AG04450 (cell line): ENCODE measurements at regions of chr7 and their contacts with region 1.

Region 1: GRCh38 chr7:1065263-1066260 is 21.2 kb downstream of the GPR146 start:
- DNase-seq: no peak
- H3K4me3 ChIP-seq: no peak overlapping the region
- H3K27ac ChIP-seq: no peak overlapping the region
- H3K27me3 ChIP-seq: peaks cover 3% of the 10 kb centered on the region
- CTCF ChIP-seq: peak; percentile 87

Region 2: GRCh38 chr7:471866-472639 is 593.5 kb before region 1 on chr7:
- CTCF ChIA-PET with region 1: no interaction called
- POLR2A ChIA-PET with region 1: no interaction called
- DNase-seq: peak; percentile 95
- H3K4me3 ChIP-seq: no peak overlapping the region
- H3K27ac ChIP-seq: peak overlapping the region; percentile 95
- H3K27me3 ChIP-seq: no peaks in the 10 kb centered on the region
- CTCF ChIP-seq: no peak

Region 3: DNA sequence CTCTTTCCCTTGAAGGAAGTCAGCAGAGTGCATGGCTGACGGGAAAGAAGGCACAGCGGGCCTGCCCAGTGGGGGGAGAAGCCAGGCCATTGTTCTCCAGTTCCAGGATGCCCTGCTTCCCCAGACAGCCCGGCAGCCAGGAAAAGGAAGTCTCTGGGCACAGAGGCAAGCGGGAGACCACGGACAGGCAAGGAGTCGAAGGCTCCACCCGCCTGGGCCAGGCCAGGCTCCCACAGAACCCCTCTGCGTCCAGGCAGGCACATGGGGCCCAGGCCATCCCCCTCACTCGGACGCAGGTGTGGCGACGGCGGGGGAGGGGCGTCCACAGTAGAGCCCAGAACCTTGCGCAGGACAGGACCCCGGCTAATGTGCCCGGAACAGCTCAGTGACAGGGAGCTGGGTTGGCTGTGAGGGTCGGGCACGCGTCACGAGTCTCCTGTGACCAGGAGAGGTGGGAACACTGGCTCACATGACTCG is 12.5 kb before region 1 on chr7:
- CTCF ChIA-PET with region 1: interaction called, 16 read pairs
- POLR2A ChIA-PET with region 1: no interaction called
- DNase-seq: no peak
- H3K4me3 ChIP-seq: no peak overlapping the region
- H3K27ac ChIP-seq: no peak overlapping the region
- H3K27me3 ChIP-seq: no peaks in the 10 kb centered on the region
- CTCF ChIP-seq: no peak

Region 4: GRCh38 chr7:1137510-1138167 is 72.1 kb after region 1 on chr7:
- CTCF ChIA-PET with region 1: interaction called, 12 read pairs
- POLR2A ChIA-PET with region 1: no interaction called
- DNase-seq: no peak
- H3K4me3 ChIP-seq: peak overlapping the region; percentile 67
- H3K27ac ChIP-seq: no peak overlapping the region
- H3K27me3 ChIP-seq: peaks cover 2% of the 10 kb centered on the region
- CTCF ChIP-seq: no peak

Region 5: GRCh38 chr7:2444476-2444875 is 1378.9 kb after region 1 on chr7:
- CTCF ChIA-PET with region 1: no interaction called
- POLR2A ChIA-PET with region 1: no interaction called
- DNase-seq: peak; percentile 33
- H3K4me3 ChIP-seq: no peak overlapping the region
- H3K27ac ChIP-seq: peak overlapping the region; percentile 52
- H3K27me3 ChIP-seq: no peaks in the 10 kb centered on the region
- CTCF ChIP-seq: no peak